BJ (cell line): ENCODE measurements at regions of chr2 and their contacts with region 1.

Region 1: DNA sequence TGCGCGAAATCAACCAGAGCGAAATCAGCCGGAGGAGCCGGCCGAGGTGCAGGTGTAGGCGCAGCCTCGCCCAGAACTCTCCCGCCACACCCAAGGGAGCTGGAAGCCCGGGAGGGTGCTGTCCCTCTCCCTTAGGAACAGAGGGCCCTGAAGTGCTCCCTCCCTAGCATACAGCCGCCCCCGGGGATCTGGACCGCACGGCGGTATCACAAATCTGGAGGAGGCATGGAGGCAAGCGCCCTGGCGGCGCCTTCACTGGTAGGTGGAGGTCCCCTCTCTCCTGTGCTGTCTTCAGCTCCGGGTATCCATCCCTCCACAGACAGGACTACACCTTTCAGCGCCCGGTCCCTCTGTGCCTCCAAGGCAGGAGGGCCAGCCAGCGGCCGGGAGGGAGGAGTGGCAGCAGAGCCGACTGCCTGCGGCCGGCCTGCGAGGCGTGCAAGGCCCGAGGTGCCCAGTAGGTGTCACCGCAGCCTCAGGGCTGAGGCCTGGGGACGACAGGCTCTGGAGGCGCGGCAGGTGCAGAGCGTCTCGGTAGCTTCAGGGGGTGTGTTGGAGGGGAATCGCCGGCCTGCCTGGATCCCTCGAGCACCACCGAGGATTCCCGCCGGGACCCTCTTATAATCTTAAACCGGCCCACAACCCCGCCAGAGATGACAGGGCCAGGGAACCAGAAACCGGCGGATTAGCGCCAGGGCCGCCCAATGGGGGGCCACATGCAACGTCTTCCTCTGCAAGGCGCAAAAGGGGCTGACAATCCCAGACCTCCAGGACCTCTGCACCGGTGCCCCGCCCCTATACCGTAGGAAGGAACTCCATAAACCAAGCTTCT is 2.8 kb downstream of the IHH start:
- DNase-seq: no peak
- H3K4me3 ChIP-seq: no peak overlapping the region
- H3K27me3 ChIP-seq: peaks cover 52% of the 10 kb centered on the region
- CTCF ChIP-seq: peak; percentile 93

Region 2: DNA sequence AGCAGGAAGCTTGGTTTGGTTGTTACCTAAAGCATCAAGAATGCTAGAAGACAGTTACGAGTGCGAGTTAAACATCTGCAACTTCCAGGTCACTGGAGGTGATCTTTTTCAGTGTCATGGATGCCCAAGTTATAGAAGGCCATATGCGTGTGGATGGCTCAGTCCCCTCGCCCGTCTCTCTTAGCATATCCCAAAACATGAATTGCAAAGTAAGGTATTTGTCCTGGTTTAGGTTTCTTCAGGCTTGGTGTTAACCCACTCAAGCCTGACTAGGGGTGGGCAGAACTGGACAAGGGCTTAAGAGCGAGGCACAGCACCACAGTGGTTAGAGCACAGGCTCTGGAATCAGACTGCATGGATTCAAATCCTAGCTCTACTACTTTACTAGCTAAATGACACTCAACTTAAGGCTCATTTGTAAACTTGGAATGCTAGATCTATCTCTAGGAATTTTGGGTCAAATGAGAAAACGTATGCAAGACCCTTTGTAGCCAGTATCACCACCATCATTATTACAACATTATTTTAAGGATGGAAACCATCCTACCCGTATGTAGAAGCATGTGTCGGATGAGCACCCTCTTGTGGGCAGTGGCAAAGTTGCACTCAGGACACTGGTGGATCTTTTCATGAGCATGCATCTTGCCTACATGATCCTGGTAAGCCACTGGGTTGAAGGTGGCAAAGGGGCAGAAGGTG is 409.7 kb before region 1 on chr2:
- CTCF ChIA-PET with region 1: no interaction called
- POLR2A ChIA-PET with region 1: no interaction called
- DNase-seq: no peak
- H3K4me3 ChIP-seq: no peak overlapping the region
- H3K27me3 ChIP-seq: no peaks in the 10 kb centered on the region
- CTCF ChIP-seq: peak; percentile 89

Region 3: GRCh38 chr2:219041252-219041651 is 16.7 kb before region 1 on chr2 and contains the start of gene CFAP65:
- CTCF ChIA-PET with region 1: interaction called, 17 read pairs
- POLR2A ChIA-PET with region 1: no interaction called
- DNase-seq: no peak
- H3K4me3 ChIP-seq: peak within 1 kb of the TSS; percentile 40
- H3K27me3 ChIP-seq: peaks cover 22% of the 10 kb centered on the region
- CTCF ChIP-seq: no peak
- polyA plus RNA-seq, gene CFAP65: not detected in 2 replicates

Region 4: GRCh38 chr2:219079417-219079816 is 21.5 kb after region 1 on chr2:
- CTCF ChIA-PET with region 1: interaction called, 151 read pairs
- POLR2A ChIA-PET with region 1: no interaction called
- DNase-seq: no peak
- H3K4me3 ChIP-seq: no peak overlapping the region
- H3K27me3 ChIP-seq: no peaks in the 10 kb centered on the region
- CTCF ChIP-seq: no peak

Region 5: DNA sequence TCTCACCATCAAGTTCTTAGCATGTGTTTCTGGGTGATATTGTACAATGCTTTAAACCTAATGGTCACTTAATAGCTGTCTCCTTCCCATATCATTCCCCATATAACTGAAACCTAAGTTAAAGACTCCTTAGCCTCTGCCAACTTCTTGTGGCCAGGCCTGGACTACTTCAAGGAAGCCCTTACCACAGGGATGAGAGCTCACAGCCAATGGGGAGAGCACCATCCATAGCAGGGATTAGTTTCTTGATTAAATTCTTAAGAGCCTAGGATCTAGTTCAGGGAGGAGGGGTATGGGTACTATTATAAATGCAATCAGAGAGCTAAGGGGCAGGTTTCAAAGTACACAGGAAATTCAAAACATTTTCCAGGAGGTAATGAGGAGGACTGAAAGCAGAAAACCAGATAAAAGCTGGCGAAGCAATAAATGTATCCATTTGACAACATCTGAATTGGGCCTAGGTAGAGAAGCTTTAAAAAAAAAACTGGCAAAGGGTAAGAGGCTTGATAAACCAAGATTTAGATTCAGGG is 37.5 kb after region 1 on chr2:
- CTCF ChIA-PET with region 1: no interaction called
- POLR2A ChIA-PET with region 1: no interaction called
- DNase-seq: no peak
- H3K4me3 ChIP-seq: no peak overlapping the region
- H3K27me3 ChIP-seq: no peaks in the 10 kb centered on the region
- CTCF ChIP-seq: no peak

Region 6: GRCh38 chr2:219142329-219142728 is 84.4 kb after region 1 on chr2:
- CTCF ChIA-PET with region 1: interaction called, 211 read pairs
- POLR2A ChIA-PET with region 1: no interaction called
- DNase-seq: peak; percentile 76
- H3K4me3 ChIP-seq: no peak overlapping the region
- H3K27me3 ChIP-seq: no peaks in the 10 kb centered on the region
- CTCF ChIP-seq: peak; percentile 59

Region 7: GRCh38 chr2:219182331-219183150 is 124.6 kb after region 1 on chr2:
- CTCF ChIA-PET with region 1: no interaction called
- POLR2A ChIA-PET with region 1: no interaction called
- DNase-seq: no peak
- H3K4me3 ChIP-seq: no peak overlapping the region
- H3K27me3 ChIP-seq: no peaks in the 10 kb centered on the region
- CTCF ChIP-seq: no peak

Region 8: GRCh38 chr2:219344751-219345430 is 287.0 kb after region 1 on chr2:
- CTCF ChIA-PET with region 1: interaction called, 10 read pairs
- POLR2A ChIA-PET with region 1: no interaction called
- DNase-seq: no peak
- H3K4me3 ChIP-seq: no peak overlapping the region
- H3K27me3 ChIP-seq: peaks cover under 1% of the 10 kb centered on the region; the same call in 1 of the 2 replicates
- CTCF ChIP-seq: no peak